SK-N-SH (cell line): ENCODE measurements at regions of chr11 and their contacts with region 1.

Region 1: GRCh38 chr11:124402326-124402922 is 3.6 kb upstream of the OR8B3 start:
- DNase-seq: peak; percentile 64
- H3K4me3 ChIP-seq: no peak overlapping the region
- H3K27ac ChIP-seq: no peak overlapping the region
- H3K4me1 ChIP-seq: no peaks in the 10 kb centered on the region; a peak in 1 of 4 replicates
- H3K27me3 ChIP-seq: peaks cover 5% of the 10 kb centered on the region; the same call in 1 of the 2 replicates
- CTCF ChIP-seq: peak; percentile 84
- EP300 ChIP-seq: no peak
- RAD21 ChIP-seq: peak; percentile 78

Region 2: GRCh38 chr11:124415356-124415923 is 13.0 kb after region 1 on chr11:
- CTCF ChIA-PET with region 1: interaction called, 18 read pairs
- POLR2A ChIA-PET with region 1: no interaction called
- DNase-seq: no peak
- H3K4me3 ChIP-seq: no peak overlapping the region
- H3K27ac ChIP-seq: no peak overlapping the region
- H3K4me1 ChIP-seq: no peaks in the 10 kb centered on the region
- H3K27me3 ChIP-seq: peaks cover 9% of the 10 kb centered on the region; the same call in 1 of the 2 replicates
- CTCF ChIP-seq: peak; percentile 59
- EP300 ChIP-seq: no peak
- RAD21 ChIP-seq: peak; percentile 38; the same call in 1 of the 2 replicates